Ascending aorta (tissue), 2 donors: ENCODE measurements at regions of chr18 and their contacts with region 1.

Region 1: DNA sequence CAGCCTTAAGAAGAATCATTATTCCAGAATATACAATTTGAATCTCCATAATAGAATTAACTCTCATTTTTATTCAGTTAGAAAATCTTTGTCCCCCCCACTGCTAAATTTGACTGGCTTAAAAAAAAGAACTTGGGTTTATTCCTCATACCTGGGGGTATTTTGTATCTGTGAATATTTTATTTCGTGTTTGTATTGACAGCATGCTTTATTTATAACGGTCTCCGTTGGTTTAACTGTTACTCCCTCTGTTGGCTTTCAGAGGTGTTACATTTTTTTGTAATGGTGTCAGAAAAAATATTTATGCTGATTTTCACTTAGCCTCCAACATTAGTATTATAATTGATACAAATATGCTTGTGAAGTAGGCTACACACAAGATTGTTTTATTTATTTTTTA is 109.1 kb downstream of the HAUS1 start:
- DNase-seq: no peak
- H3K4me3 ChIP-seq: no peak overlapping the region
- H3K27ac ChIP-seq: no peak overlapping the region
- H3K4me1 ChIP-seq: no peaks in the 10 kb centered on the region
- H3K27me3 ChIP-seq: no peaks in the 10 kb centered on the region
- CTCF ChIP-seq: peak in 2 of 3 experiments; percentile 4 to 18

Region 2: GRCh38 chr18:46155641-46156051 is 57.6 kb before region 1 on chr18:
- intact Hi-C with region 1: loop called (anchors 10 kb)
- DNase-seq: no peak
- H3K4me3 ChIP-seq: no peak overlapping the region
- H3K27ac ChIP-seq: no peak overlapping the region
- H3K4me1 ChIP-seq: no peaks in the 10 kb centered on the region
- H3K27me3 ChIP-seq: no peaks in the 10 kb centered on the region
- CTCF ChIP-seq: no peak

Region 3: GRCh38 chr18:46369323-46369722 is 156.0 kb after region 1 on chr18:
- intact Hi-C with region 1: no loop called
- DNase-seq: no peak
- H3K4me3 ChIP-seq: no peak overlapping the region
- H3K27ac ChIP-seq: no peak overlapping the region
- H3K4me1 ChIP-seq: no peaks in the 10 kb centered on the region
- H3K27me3 ChIP-seq: no peaks in the 10 kb centered on the region
- CTCF ChIP-seq: no peak